HCT116 (cell line): ENCODE measurements at regions of chr4 and their contacts with region 1.

Region 1: DNA sequence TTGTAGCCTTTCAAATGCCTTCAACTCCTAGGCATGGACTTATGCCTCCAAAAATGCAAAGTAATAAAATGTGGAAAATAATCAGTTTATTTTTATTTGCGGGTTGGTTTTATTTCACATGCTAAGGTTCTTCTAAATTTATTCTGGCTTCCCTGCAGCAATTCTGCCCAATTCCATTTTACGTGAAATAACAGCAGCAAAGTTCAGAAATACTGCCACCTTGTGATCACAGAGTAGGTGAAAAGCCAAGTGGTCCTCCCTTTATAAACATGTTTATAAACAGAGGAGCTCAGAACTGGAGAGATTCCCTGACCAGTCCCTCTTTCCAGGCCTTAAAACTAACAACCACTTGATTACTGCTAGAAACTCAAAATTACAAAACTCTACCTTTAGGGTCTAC is 14.7 kb upstream of the DCHS2 start:
- DNase-seq: peak; percentile 13
- ATAC-seq: peak; percentile 79
- H3K4me3 ChIP-seq: no peak overlapping the region
- H3K27ac ChIP-seq: no peak overlapping the region
- H3K4me1 ChIP-seq: peaks cover 0 to 2% of the 10 kb centered on the region in 2 experiments; a peak in 1 of 4 replicates
- H3K27me3 ChIP-seq: peaks cover 14% of the 10 kb centered on the region
- CTCF ChIP-seq: peak; percentile 45 to 52 (median 49); a peak in 4 of 6 replicates
- POLR2A ChIP-seq: no peak
- RAD21 ChIP-seq: peak; percentile 62

Region 2: DNA sequence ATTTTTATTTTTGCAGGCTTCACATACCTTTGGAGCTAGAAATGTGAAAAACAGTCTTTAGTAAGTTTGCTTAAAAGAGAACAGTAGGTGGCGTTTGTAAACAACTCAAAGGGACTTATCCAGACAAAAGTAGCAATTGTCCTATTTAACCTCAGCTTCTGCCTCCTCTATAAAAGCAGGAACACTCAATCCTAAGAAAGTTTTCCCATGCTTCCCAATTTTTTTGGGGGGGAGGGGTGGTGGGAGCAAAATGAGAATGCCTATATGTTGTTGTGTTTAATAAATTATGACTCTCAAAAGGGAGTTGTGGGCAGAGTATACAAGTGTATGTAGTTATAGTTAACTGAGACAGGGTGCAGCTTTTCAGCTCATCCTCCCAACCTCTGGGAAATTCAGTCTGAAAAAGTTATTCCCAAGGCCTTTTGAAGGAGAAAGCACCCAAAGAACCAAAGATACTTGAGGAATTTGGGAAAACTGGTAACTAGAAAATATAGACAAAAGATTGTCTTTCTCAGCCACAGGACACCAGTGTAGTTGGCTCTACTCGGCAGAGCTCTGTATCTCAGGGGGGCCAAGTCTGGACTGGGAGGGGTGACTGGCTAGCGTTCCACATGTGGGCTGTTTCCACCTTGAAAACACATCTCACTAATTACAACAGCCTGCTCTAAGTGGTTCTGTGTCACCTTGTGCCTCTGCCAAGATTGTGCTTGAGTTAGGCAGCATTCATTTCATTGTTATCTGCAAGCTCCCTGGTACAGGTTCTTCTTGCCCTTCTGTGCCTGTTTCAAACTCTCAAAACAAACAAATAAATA is 720.1 kb before region 1 on chr4:
- CTCF ChIA-PET with region 1: interaction called, 13 read pairs
- POLR2A ChIA-PET with region 1: no interaction called
- RAD21 ChIA-PET with region 1: no interaction called
- intact Hi-C with region 1: loop called (anchors 5 kb)
- DNase-seq: peak; percentile 26
- ATAC-seq: peak; percentile 81
- H3K4me3 ChIP-seq: no peak overlapping the region
- H3K27ac ChIP-seq: no peak overlapping the region
- H3K4me1 ChIP-seq: no peaks in the 10 kb centered on the region
- H3K27me3 ChIP-seq: peaks cover 7% of the 10 kb centered on the region; the same call in 1 of the 2 replicates
- CTCF ChIP-seq: peak; percentile 51 to 63 (median 55); a peak in 5 of 6 replicates
- POLR2A ChIP-seq: no peak
- RAD21 ChIP-seq: peak; percentile 70

Region 3: GRCh38 chr4:154329268-154329868 is 176.9 kb before region 1 on chr4:
- CTCF ChIA-PET with region 1: interaction called, 8 read pairs
- POLR2A ChIA-PET with region 1: no interaction called
- RAD21 ChIA-PET with region 1: interaction called in 1 of 2 experiments, 5 read pairs
- intact Hi-C with region 1: loop called (anchors 2 kb)
- DNase-seq: no peak
- ATAC-seq: peak; percentile 86
- H3K4me3 ChIP-seq: no peak overlapping the region
- H3K27ac ChIP-seq: no peak overlapping the region
- H3K4me1 ChIP-seq: no peaks in the 10 kb centered on the region
- H3K27me3 ChIP-seq: no peaks in the 10 kb centered on the region
- CTCF ChIP-seq: peak; percentile 39 to 58 (median 55); a peak in 5 of 6 replicates
- POLR2A ChIP-seq: no peak
- RAD21 ChIP-seq: peak; percentile 63

Region 4: GRCh38 chr4:154399259-154399974 is 106.8 kb before region 1 on chr4:
- CTCF ChIA-PET with region 1: interaction called, 5 read pairs
- POLR2A ChIA-PET with region 1: no interaction called
- RAD21 ChIA-PET with region 1: no interaction called
- intact Hi-C with region 1: loop called (anchors 2 kb)
- DNase-seq: no peak
- ATAC-seq: no peak
- H3K4me3 ChIP-seq: no peak overlapping the region
- H3K27ac ChIP-seq: no peak overlapping the region
- H3K4me1 ChIP-seq: no peaks in the 10 kb centered on the region
- H3K27me3 ChIP-seq: peaks cover 5% of the 10 kb centered on the region; the same call in 1 of the 2 replicates
- CTCF ChIP-seq: peak; percentile 23 to 40 (median 25); a peak in 2 of 6 replicates
- POLR2A ChIP-seq: no peak
- RAD21 ChIP-seq: peak; percentile 65